ENCODE measurements at regions of chr1 and their contacts with region 1.

Region 1: DNA sequence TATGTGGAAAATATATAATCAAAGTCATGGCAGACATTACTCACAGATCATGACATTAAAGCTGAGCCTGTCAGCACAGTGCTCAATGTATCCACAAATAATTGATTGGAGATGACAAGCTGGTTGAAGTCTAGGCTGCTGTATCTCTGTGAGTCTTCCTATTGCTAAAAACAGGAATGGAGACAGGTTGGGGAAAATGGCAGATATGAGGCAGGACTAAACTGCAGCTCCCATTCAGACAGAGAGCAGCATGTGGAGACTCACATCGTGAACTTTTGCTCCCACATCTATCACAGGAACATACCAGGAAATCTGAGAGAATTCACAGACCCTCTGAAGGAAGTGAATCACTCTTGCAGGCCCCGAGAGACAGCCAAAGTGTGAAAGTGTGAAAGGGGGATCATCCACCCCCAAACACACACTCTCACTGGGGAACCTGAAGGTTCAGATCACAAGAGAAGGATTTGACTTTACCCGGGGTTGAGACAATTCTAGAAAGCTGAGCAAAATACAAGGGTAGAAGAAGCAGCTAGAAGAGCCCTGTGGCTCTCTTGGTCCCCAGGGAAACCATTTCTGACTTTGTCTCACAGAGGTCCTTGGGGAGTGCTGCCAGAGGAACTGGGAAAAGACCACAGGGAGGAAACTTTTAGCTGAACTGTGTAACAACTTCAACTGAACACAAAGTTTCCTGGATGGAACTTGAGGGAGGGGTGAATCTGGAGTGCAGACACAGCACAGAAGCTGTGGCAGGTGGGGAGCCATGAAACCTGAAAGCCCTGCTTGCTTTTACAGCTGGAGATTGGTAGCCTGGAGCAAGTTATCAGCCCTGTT is 173.4 kb downstream of the S1PR1 start:
- DNase-seq: peak; percentile 99
- ATAC-seq: peak; percentile 64
- H3K4me3 ChIP-seq: no peak overlapping the region
- H3K27ac ChIP-seq: peak overlapping the region; percentile 98
- H3K4me1 ChIP-seq: peaks cover 51% of the 10 kb centered on the region
- H3K27me3 ChIP-seq: no peaks in the 10 kb centered on the region
- CTCF ChIP-seq: no peak
- EP300 ChIP-seq: peak in 1 of 2 experiments; percentile 67; a peak in 1 of 4 replicates
- POLR2A ChIP-seq: peak; percentile 59
- RAD21 ChIP-seq: peak; percentile 42; the same call in 1 of the 2 replicates

Region 2: GRCh38 chr1:100834777-100835660 is 575.2 kb before region 1 on chr1:
- CTCF ChIA-PET with region 1: no interaction called
- POLR2A ChIA-PET with region 1: no interaction called
- RAD21 ChIA-PET with region 1: no interaction called
- SMC1A ChIA-PET with region 1: no interaction called
- in situ Hi-C with region 1: no loop called
- intact Hi-C with region 1: no loop called
- DNase-seq: no peak
- ATAC-seq: peak; percentile 84
- H3K4me3 ChIP-seq: no peak overlapping the region
- H3K27ac ChIP-seq: no peak overlapping the region
- H3K4me1 ChIP-seq: no peaks in the 10 kb centered on the region
- H3K27me3 ChIP-seq: no peaks in the 10 kb centered on the region
- CTCF ChIP-seq: peak; percentile 35 to 56 (median 55); a peak in 5 of 6 replicates
- EP300 ChIP-seq: no peak
- POLR2A ChIP-seq: no peak
- RAD21 ChIP-seq: peak; percentile 52

Region 3: DNA sequence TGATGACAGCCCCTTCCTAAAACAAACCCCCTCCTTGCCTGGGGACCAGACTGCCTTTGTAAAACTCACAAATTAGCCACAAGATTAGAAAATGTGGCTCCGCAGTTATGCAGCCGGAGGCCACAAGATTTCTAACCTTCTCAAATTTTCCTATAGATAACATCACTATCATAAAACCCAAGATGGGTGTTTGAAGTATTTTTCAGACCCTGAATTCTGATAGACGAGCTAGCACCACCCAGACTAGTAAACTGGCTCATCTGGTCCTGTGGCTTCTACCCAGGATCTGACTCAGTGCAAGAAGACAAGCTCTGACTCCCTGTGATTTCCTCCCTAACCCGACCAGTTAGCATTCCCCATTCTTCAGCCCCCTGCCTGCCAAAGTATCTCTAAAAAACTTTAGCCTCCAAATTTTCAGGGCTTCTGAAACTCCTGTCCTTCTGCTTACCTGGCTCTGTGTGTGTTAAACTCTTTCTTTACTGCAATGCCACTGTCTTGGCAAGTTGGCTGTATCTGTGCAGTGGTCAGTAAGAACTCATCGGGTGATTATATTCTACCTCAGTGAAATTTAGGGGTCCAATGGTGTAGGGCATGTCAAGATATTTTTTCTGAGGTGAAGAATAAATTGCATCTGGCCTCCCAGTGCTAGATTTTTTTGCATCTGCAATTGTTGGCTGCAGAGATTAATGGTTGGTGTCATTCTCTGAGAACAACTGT is 71.4 kb before region 1 on chr1:
- CTCF ChIA-PET with region 1: no interaction called
- POLR2A ChIA-PET with region 1: no interaction called
- RAD21 ChIA-PET with region 1: no interaction called
- SMC1A ChIA-PET with region 1: no interaction called
- in situ Hi-C with region 1: no loop called
- intact Hi-C with region 1: no loop called
- DNase-seq: no peak
- ATAC-seq: no peak
- H3K4me3 ChIP-seq: no peak overlapping the region
- H3K27ac ChIP-seq: no peak overlapping the region
- H3K4me1 ChIP-seq: no peaks in the 10 kb centered on the region
- H3K27me3 ChIP-seq: no peaks in the 10 kb centered on the region
- CTCF ChIP-seq: no peak
- EP300 ChIP-seq: no peak
- POLR2A ChIP-seq: no peak
- RAD21 ChIP-seq: no peak

Region 4: DNA sequence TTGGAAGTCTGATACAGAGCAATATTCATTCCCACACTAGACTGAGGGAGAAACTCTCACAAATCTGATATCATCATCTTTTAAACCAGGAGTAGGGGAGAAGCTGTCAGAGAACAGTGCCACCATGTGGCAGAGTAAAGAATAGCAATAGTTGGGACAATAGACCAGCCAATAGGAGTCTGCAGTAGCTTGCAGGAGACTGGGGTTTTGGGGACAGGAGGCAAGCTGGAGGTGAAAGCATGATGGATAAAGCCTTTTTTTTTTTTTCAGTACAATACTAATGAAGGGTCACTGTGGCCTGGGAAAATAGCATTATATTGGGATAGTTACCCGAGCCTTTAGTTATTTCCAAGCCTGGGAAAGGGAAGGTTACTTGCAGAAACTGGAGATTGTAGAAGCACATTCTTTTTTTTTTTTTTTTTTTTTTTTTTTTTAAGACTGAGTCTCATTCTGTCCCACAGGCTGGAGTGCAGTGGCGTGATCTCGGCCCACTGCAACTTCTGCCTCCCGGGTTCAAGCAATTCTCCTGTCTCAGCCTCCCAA is 52.7 kb before region 1 on chr1:
- CTCF ChIA-PET with region 1: interaction called, 38 read pairs
- POLR2A ChIA-PET with region 1: interaction called, 23 read pairs
- RAD21 ChIA-PET with region 1: interaction called, 107 read pairs
- SMC1A ChIA-PET with region 1: interaction called, 618 read pairs
- in situ Hi-C with region 1: no loop called
- intact Hi-C with region 1: loop called (anchors 1 kb)
- DNase-seq: peak; percentile 95
- ATAC-seq: peak; percentile 99
- H3K4me3 ChIP-seq: no peak overlapping the region
- H3K27ac ChIP-seq: peak overlapping the region; percentile 75
- H3K4me1 ChIP-seq: peaks cover 7% of the 10 kb centered on the region; the same call in 1 of the 2 replicates
- H3K27me3 ChIP-seq: no peaks in the 10 kb centered on the region
- CTCF ChIP-seq: peak; percentile 79 to 92 (median 89)
- EP300 ChIP-seq: no peak
- POLR2A ChIP-seq: no peak
- RAD21 ChIP-seq: peak; percentile 93

Region 5: DNA sequence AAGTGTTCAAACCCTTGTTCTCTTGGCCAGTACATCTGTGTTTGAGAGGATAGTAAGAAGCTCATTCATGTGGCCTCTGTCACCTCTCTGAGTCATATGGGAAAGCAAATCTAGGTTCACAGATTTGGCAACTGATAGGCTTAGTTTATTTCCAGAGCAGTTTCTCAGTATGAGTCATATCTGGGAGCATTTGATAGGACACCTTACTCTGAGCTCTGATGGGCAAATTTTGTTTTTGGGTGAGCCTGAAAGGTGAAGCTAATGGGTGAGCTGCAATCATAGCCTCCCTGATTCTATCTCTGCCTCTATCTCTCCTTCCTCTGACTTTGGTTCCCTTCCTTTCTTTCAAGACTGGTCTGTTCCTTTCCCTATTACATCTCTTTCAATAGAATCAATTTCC is 39.0 kb before region 1 on chr1:
- CTCF ChIA-PET with region 1: interaction called, 53 read pairs
- POLR2A ChIA-PET with region 1: interaction called, 74 read pairs
- RAD21 ChIA-PET with region 1: interaction called, 219 read pairs
- SMC1A ChIA-PET with region 1: interaction called, 618 read pairs
- in situ Hi-C with region 1: no loop called
- intact Hi-C with region 1: loop called (anchors 1 kb)
- DNase-seq: peak; percentile 96
- ATAC-seq: peak; percentile 92
- H3K4me3 ChIP-seq: peak overlapping the region; percentile 53
- H3K27ac ChIP-seq: peak overlapping the region; percentile 90
- H3K4me1 ChIP-seq: peaks cover 20% of the 10 kb centered on the region
- H3K27me3 ChIP-seq: no peaks in the 10 kb centered on the region
- CTCF ChIP-seq: no peak
- EP300 ChIP-seq: peak; percentile 70 to 83; a peak in 3 of 4 replicates
- POLR2A ChIP-seq: no peak; the same call in 1 of the 2 replicates
- RAD21 ChIP-seq: peak; percentile 26

Region 6: DNA sequence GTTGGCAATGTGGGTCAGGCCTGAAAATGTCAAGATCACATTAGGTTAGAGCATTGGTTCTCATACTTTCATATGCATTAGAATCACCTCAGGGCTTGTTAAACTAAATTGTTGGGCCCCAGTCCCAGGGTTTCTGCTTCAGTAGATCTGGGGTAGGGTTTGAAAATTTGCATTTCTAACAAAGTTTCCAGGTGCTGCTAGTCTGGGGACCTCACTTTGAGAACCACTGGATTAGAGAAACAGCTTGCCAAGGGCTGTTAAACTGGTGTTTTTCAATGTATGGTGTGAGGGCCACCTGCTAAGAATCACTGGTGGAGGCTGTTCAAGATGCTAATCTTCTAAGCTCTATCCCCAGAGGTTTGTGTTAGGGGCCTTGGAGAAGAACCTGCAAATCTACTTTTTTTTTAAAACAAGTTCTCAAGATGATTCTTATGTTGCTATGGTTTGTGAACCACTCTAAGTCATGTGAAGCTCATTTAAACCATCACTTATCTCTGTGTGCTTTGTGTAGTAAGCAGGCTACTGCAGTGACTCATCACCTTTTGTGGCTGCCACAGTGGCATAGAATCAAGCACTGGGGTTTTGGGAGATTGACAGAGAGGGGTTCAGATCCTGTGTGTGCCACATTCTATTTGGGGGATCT is 21.2 kb before region 1 on chr1:
- CTCF ChIA-PET with region 1: interaction called, 71 read pairs
- POLR2A ChIA-PET with region 1: interaction called, 143 read pairs
- RAD21 ChIA-PET with region 1: interaction called, 225 read pairs
- SMC1A ChIA-PET with region 1: interaction called, 276 read pairs
- in situ Hi-C with region 1: no loop called
- intact Hi-C with region 1: loop called (anchors 1 kb)
- DNase-seq: peak; percentile 90
- ATAC-seq: peak; percentile 93
- H3K4me3 ChIP-seq: no peak overlapping the region
- H3K27ac ChIP-seq: peak overlapping the region; percentile 96
- H3K4me1 ChIP-seq: peaks cover 34% of the 10 kb centered on the region
- H3K27me3 ChIP-seq: no peaks in the 10 kb centered on the region
- CTCF ChIP-seq: no peak
- EP300 ChIP-seq: no peak; a peak in 1 of 4 replicates
- POLR2A ChIP-seq: no peak
- RAD21 ChIP-seq: peak; percentile 15; the same call in 1 of the 2 replicates

Region 7: DNA sequence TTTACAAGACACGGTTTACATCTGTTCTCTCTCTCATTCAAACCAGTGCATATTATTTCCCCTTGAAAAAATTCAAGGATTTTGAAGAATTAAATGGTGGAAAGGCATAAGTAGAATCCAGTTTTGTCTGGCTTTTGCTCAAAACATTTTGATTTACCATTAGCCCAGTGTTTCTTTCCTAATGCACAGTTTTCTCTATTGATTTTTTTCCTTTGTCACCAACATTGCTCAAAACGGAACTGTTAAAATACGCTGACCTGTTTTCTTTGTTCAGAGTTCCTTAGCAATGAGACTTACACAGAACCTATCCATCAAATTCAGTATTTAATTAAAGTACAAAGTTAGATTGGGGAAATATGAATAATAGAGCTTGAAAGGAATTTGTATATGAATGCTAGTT is 11.0 kb before region 1 on chr1:
- CTCF ChIA-PET with region 1: interaction called, 36 read pairs
- POLR2A ChIA-PET with region 1: interaction called, 34 read pairs
- RAD21 ChIA-PET with region 1: interaction called, 91 read pairs
- SMC1A ChIA-PET with region 1: interaction called, 276 read pairs
- in situ Hi-C with region 1: no loop called
- intact Hi-C with region 1: no loop called
- DNase-seq: no peak
- ATAC-seq: peak; percentile 14
- H3K4me3 ChIP-seq: no peak overlapping the region
- H3K27ac ChIP-seq: peak overlapping the region; percentile 74
- H3K4me1 ChIP-seq: peaks cover 13% of the 10 kb centered on the region; the same call in 1 of the 2 replicates
- H3K27me3 ChIP-seq: no peaks in the 10 kb centered on the region
- CTCF ChIP-seq: no peak
- EP300 ChIP-seq: no peak
- POLR2A ChIP-seq: no peak
- RAD21 ChIP-seq: no peak

Region 8: GRCh38 chr1:101431956-101432510 is 21.8 kb after region 1 on chr1:
- CTCF ChIA-PET with region 1: interaction called, 323 read pairs
- POLR2A ChIA-PET with region 1: interaction called, 209 read pairs
- RAD21 ChIA-PET with region 1: interaction called, 503 read pairs
- SMC1A ChIA-PET with region 1: interaction called, 507 read pairs
- in situ Hi-C with region 1: no loop called
- intact Hi-C with region 1: loop called (anchors 1 kb)
- DNase-seq: no peak
- ATAC-seq: no peak
- H3K4me3 ChIP-seq: no peak overlapping the region
- H3K27ac ChIP-seq: peak overlapping the region; percentile 37; the same call in 1 of the 2 replicates
- H3K4me1 ChIP-seq: peaks cover 38% of the 10 kb centered on the region
- H3K27me3 ChIP-seq: no peaks in the 10 kb centered on the region
- CTCF ChIP-seq: no peak
- EP300 ChIP-seq: no peak; a peak in 1 of 4 replicates
- POLR2A ChIP-seq: no peak
- RAD21 ChIP-seq: no peak

Region 9: DNA sequence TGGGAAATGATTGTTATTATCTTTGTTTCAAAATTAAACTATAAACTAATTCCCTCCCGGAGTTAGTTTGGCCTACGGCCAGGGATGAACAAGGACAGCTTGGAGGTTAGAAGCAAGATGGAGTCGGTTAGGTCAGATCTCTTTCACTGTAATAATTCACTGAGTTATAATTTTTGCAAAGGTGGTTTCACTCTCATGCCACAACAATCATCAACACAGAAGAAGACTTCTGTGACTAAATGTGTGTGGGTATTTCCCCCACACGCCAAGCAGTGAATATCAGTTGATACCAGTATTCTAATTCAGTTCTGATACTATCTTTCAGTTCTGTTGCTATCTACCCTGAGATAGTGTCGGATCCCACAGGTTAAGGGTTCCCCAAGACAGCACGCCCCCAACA is 41.6 kb after region 1 on chr1:
- CTCF ChIA-PET with region 1: interaction called, 3 read pairs
- POLR2A ChIA-PET with region 1: interaction called, 3 read pairs
- RAD21 ChIA-PET with region 1: interaction called, 7 read pairs
- SMC1A ChIA-PET with region 1: interaction called, 16 read pairs
- in situ Hi-C with region 1: no loop called
- intact Hi-C with region 1: no loop called
- DNase-seq: no peak
- ATAC-seq: peak; percentile 78
- H3K4me3 ChIP-seq: no peak overlapping the region
- H3K27ac ChIP-seq: peak overlapping the region; percentile 77
- H3K4me1 ChIP-seq: peaks cover 44% of the 10 kb centered on the region
- H3K27me3 ChIP-seq: no peaks in the 10 kb centered on the region
- CTCF ChIP-seq: no peak
- EP300 ChIP-seq: no peak
- POLR2A ChIP-seq: no peak
- RAD21 ChIP-seq: no peak

Region 10: GRCh38 chr1:101463195-101463594 is 52.9 kb after region 1 on chr1:
- CTCF ChIA-PET with region 1: no interaction called
- POLR2A ChIA-PET with region 1: no interaction called
- RAD21 ChIA-PET with region 1: no interaction called
- SMC1A ChIA-PET with region 1: no interaction called
- in situ Hi-C with region 1: no loop called
- intact Hi-C with region 1: no loop called
- DNase-seq: no peak
- ATAC-seq: no peak
- H3K4me3 ChIP-seq: no peak overlapping the region
- H3K27ac ChIP-seq: no peak overlapping the region
- H3K4me1 ChIP-seq: no peaks in the 10 kb centered on the region
- H3K27me3 ChIP-seq: no peaks in the 10 kb centered on the region
- CTCF ChIP-seq: no peak
- EP300 ChIP-seq: no peak
- POLR2A ChIP-seq: no peak
- RAD21 ChIP-seq: no peak

Measured in GM12878 (cell line).